ENCODE measurements at regions of chr9 and their contacts with region 1.

Region 1: DNA sequence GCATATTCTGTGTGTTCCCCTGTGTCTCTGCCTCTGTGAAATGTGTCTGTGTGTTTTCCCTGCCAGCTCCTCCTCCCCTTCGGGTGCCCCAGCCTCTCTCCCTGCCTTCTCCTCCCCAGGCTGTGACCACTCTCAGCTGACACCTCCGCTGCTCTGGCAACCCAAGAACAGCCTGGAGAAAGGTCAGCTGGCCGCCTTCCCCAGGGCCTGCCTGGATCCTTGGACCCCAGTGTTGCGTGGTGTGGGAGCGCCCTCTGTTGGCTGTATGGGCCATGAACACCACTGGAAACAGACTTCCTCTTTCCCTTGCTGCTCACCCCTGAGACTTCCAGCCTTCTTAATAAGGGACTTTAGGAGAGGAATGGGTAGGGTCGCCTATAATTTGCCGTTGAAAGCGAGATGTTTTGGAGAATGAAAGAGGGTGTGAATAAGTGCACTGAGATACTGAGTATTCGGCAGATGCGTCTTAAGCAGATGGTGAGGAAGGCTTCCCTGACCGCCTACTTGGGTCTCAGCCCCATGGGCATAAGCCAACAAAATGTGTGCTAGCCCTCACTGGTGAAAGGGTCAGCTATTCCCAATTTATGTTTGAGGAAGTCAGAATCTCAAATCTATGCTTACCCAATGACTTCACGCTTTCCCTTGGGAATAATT is 114.9 kb upstream of the TRIM32 start:
- DNase-seq: peak; percentile 80
- H3K4me3 Mint-ChIP-seq: no peak overlapping the region
- H3K27ac Mint-ChIP-seq: no peak overlapping the region
- H3K4me1 Mint-ChIP-seq: peaks cover 4% of the 10 kb centered on the region
- H3K27me3 Mint-ChIP-seq: no peaks in the 10 kb centered on the region
- CTCF ChIP-seq: peak; percentile 95

Region 2: GRCh38 chr9:116149844-116150243 is 422.4 kb before region 1 on chr9:
- CTCF ChIA-PET with region 1: interaction called, 40 read pairs
- POLR2A ChIA-PET with region 1: interaction called, 4 read pairs
- intact Hi-C with region 1: loop called (anchors 1 kb)
- DNase-seq: peak; percentile 51
- H3K4me3 Mint-ChIP-seq: no peak overlapping the region
- H3K27ac Mint-ChIP-seq: no peak overlapping the region
- H3K4me1 Mint-ChIP-seq: peaks cover 24% of the 10 kb centered on the region
- H3K27me3 Mint-ChIP-seq: no peaks in the 10 kb centered on the region
- CTCF ChIP-seq: peak; percentile 47

Region 3: DNA sequence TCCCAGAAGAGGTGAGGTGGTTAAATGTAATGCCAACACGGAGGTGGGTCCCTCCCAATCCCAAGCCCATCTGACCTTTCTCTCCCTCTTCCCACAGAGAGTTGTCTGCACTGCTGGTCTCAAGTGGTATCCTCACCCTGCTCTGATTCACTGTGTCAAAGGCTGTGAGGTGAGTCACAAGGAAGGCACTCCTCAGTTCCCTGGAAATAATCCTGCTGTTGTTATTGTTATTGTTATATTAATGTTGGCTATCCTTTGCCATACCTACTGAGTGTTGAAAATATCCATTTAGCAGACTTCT is 194.8 kb before region 1 on chr9:
- CTCF ChIA-PET with region 1: no interaction called
- POLR2A ChIA-PET with region 1: no interaction called
- intact Hi-C with region 1: loop called (anchors 5 kb)
- DNase-seq: peak; percentile 90
- H3K4me3 Mint-ChIP-seq: no peak overlapping the region
- H3K27ac Mint-ChIP-seq: peak overlapping the region; percentile 81
- H3K4me1 Mint-ChIP-seq: peaks cover 22% of the 10 kb centered on the region
- H3K27me3 Mint-ChIP-seq: no peaks in the 10 kb centered on the region
- CTCF ChIP-seq: no peak

Region 4: GRCh38 chr9:116549061-116549664 is 23.1 kb before region 1 on chr9:
- CTCF ChIA-PET with region 1: interaction called, 12 read pairs
- POLR2A ChIA-PET with region 1: no interaction called
- intact Hi-C with region 1: no loop called
- DNase-seq: peak; percentile 99
- H3K4me3 Mint-ChIP-seq: peak overlapping the region; percentile 1
- H3K27ac Mint-ChIP-seq: no peak overlapping the region
- H3K4me1 Mint-ChIP-seq: peaks cover 20% of the 10 kb centered on the region
- H3K27me3 Mint-ChIP-seq: no peaks in the 10 kb centered on the region
- CTCF ChIP-seq: no peak

Region 5: GRCh38 chr9:116646661-116647512 is 74.7 kb after region 1 on chr9:
- CTCF ChIA-PET with region 1: interaction called, 6 read pairs
- POLR2A ChIA-PET with region 1: interaction called, 3 read pairs
- intact Hi-C with region 1: loop called (anchors 5 kb)
- DNase-seq: peak; percentile 59
- H3K4me3 Mint-ChIP-seq: no peak overlapping the region
- H3K27ac Mint-ChIP-seq: no peak overlapping the region
- H3K4me1 Mint-ChIP-seq: peaks cover 6% of the 10 kb centered on the region
- H3K27me3 Mint-ChIP-seq: no peaks in the 10 kb centered on the region
- CTCF ChIP-seq: peak; percentile 80